ENCODE measurements at regions of chr1 and their contacts with region 1.

Region 1: GRCh38 chr1:2314803-2315673 is 76.3 kb downstream of the MORN1 start:
- DNase-seq: peak; percentile 53
- ATAC-seq: peak; percentile 51
- H3K4me3 ChIP-seq: peak overlapping the region; percentile 65
- H3K27ac ChIP-seq: no peak overlapping the region
- H3K4me1 ChIP-seq: peaks cover 6% of the 10 kb centered on the region; the same call in 1 of the 2 replicates
- H3K27me3 ChIP-seq: no peaks in the 10 kb centered on the region
- CTCF ChIP-seq: peak; percentile 64

Region 2: DNA sequence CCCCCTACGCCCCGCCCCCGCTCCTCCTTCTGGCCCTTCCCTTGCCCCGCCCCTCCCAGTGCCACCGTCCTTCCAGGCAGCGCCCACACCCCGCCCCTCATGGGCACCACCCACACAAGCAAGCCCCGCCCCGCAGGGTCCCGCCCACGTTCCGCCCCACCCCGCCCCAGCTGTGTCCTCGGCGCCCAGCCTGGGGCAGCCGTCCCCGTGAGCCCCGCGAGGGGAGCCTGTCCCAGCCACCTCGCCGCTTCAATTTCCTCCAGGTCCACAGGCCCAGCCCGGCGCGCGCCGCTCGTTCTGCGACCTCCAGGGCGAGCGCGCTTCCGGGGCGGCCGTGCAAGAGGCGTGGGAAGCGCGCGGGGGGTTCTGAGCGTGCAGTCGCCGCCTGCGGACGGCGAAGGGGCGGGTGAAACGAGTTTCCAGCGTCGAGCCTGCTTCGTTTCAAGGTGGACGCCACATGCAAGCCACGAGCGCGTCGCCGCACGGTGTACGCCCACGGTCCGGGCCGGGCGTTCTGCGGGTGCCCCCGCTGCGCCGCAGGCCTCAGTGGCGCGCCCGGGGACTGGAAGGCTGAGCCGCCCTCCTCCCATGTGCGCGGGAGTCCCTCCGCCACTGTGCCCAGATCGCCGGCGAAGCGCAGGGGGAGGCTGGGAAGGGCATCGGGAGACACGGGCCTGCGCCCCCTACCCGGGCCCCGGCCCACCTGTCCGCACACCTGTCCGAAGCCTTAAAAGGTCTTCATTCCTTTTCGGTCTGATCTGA is 109.7 kb before region 1 on chr1:
- CTCF ChIA-PET with region 1: interaction called, 3 read pairs
- POLR2A ChIA-PET with region 1: no interaction called
- intact Hi-C with region 1: loop called (anchors 5 kb)
- DNase-seq: peak; percentile 93
- ATAC-seq: peak; percentile 31
- H3K4me3 ChIP-seq: peak overlapping the region; percentile 64
- H3K27ac ChIP-seq: no peak overlapping the region
- H3K4me1 ChIP-seq: peaks cover 40% of the 10 kb centered on the region
- H3K27me3 ChIP-seq: no peaks in the 10 kb centered on the region
- CTCF ChIP-seq: no peak

Region 3: DNA sequence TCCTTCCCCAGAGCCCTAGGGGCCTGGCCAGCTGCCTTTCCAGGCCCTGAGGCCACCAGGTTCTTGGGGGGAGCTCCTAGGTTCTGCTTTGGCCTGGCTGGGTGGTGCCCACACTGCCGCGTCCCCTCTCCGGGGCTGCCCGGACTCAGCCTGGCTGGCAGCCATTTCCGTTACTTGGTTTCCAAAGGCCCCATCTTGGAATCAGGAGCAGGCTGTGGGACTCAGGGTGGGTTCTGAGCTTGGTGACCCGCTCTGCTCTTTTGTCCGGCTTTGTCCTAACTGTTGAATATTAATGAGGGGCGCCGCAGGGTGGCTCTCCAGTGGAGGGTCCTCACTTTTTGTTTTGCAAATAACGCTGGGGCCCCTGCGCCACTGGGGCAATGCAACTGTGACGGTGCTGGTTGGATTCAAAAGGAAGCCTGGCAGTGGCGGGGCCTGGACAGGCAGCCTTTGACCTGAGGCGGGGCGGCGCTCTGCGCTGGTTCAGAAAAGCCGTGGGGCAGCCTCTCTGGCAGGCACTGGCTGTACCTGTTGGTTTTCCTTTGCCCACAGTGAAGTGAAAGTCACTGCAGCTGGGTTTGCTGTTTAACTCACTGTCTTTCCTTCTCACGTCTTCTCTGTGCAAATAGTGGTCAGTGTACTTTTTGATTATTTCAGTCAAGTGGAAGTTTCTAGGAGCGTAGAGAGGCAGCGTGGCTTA is 66.8 kb before region 1 on chr1:
- CTCF ChIA-PET with region 1: no interaction called
- POLR2A ChIA-PET with region 1: no interaction called
- intact Hi-C with region 1: loop called (anchors 5 kb)
- DNase-seq: no peak
- ATAC-seq: no peak
- H3K4me3 ChIP-seq: no peak overlapping the region
- H3K27ac ChIP-seq: no peak overlapping the region
- H3K4me1 ChIP-seq: peaks cover 14% of the 10 kb centered on the region
- H3K27me3 ChIP-seq: no peaks in the 10 kb centered on the region
- CTCF ChIP-seq: no peak

Region 4: GRCh38 chr1:2381741-2382620 is 66.9 kb after region 1 on chr1:
- CTCF ChIA-PET with region 1: interaction called, 8 read pairs
- POLR2A ChIA-PET with region 1: interaction called, 4 read pairs
- intact Hi-C with region 1: loop called (anchors 5 kb)
- DNase-seq: peak; percentile 91
- ATAC-seq: peak; percentile 97
- H3K4me3 ChIP-seq: no peak overlapping the region
- H3K27ac ChIP-seq: no peak overlapping the region
- H3K4me1 ChIP-seq: no peaks in the 10 kb centered on the region
- H3K27me3 ChIP-seq: no peaks in the 10 kb centered on the region
- CTCF ChIP-seq: peak; percentile 99

Region 5: GRCh38 chr1:2493691-2494322 is 178.8 kb after region 1 on chr1:
- CTCF ChIA-PET with region 1: no interaction called
- POLR2A ChIA-PET with region 1: no interaction called
- intact Hi-C with region 1: no loop called
- DNase-seq: peak; percentile 33
- ATAC-seq: peak; percentile 61
- H3K4me3 ChIP-seq: peak overlapping the region; percentile 8; the same call in 1 of the 2 replicates
- H3K27ac ChIP-seq: peak overlapping the region; percentile 20
- H3K4me1 ChIP-seq: peaks cover 20% of the 10 kb centered on the region
- H3K27me3 ChIP-seq: no peaks in the 10 kb centered on the region
- CTCF ChIP-seq: no peak

Measured in PC-3 (cell line).